ENCODE measurements at regions of chr5 and their contacts with region 1.

Region 1: GRCh38 chr5:11527652-11528349 is 376.4 kb downstream of the CTNND2 start:
- DNase-seq: no peak
- H3K4me3 ChIP-seq: no peak overlapping the region
- H3K27ac ChIP-seq: no peak overlapping the region
- H3K4me1 ChIP-seq: no peaks in the 10 kb centered on the region
- H3K27me3 ChIP-seq: no peaks in the 10 kb centered on the region
- CTCF ChIP-seq: no peak
- EP300 ChIP-seq: no peak
- POLR2A ChIP-seq: no peak

Region 2: DNA sequence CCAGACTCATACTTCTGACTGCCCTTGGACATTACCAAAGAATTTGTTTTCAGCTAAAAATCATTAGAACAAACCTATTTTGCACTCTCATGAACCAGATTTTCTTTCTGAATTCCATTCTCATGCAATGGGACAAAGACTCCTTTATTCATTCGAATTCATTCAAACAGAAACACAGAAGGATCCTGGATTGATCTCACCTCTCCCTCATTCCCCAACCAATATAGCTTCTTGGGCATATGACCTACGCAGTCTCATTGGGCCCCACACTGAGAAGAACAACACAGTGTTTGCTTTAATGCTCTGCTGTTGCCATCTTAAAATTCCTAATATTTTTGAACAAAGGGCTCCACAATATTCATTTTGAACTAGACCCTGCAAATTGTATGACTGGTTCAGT is 15.9 kb before region 1 on chr5:
- in situ Hi-C with region 1: no loop called
- intact Hi-C with region 1: loop called (anchors 2 kb)
- DNase-seq: no peak
- H3K4me3 ChIP-seq: no peak overlapping the region
- H3K27ac ChIP-seq: no peak overlapping the region
- H3K4me1 ChIP-seq: no peaks in the 10 kb centered on the region
- H3K27me3 ChIP-seq: no peaks in the 10 kb centered on the region
- CTCF ChIP-seq: no peak
- EP300 ChIP-seq: no peak
- POLR2A ChIP-seq: no peak

Measured in transverse colon (tissue), 4 donors.